CD8-positive, alpha-beta T cell (primary cell): ENCODE measurements at regions of chr11 and their contacts with region 1.

Region 1: DNA sequence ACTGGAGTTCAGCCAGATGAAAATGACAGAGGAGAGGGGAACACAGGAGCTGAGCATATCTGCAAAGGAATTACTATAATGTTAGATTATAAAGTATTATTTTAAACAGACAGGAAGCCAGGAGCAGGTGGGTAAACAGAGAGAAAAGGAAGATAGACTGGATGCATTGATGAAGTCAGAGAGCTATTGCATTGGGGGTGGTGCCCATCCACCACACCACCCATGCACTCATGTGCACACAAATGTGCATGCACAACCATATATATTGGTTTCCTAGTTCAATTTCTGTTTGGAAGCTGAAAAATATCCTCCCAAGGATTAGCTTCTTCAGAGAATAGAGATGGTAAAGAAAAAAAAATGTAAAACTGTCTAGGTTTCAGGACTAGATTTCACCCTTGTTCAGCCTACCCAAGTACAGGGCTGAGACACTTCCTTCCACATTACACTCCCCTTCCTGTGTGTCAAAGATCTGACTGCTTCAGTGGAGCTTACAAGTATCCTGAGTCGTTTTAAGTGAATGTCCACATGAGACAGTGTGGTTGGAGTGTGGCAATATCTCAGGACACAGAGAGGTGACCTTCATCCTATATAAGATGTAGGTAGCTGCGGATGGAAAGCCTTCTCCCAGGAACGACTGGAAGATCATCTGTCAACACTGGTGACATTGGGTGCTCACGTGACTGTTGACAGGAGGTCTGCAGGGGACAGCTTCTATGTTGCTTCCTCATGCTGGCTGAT is 12.2 kb upstream of the SMPD1 start:
- DNase-seq: peak in 1 of 9 experiments; percentile 45
- ATAC-seq: peak; percentile 81
- H3K4me3 ChIP-seq: peak overlapping the region in 1 of 2 experiments; percentile 17
- H3K4me3 Mint-ChIP-seq: peak overlapping the region; percentile 58
- H3K27ac ChIP-seq: peak overlapping the region in 1 of 2 experiments; percentile 7
- H3K27ac Mint-ChIP-seq: peak overlapping the region; percentile 86
- H3K4me1 ChIP-seq: peaks cover 18% of the 10 kb centered on the region
- H3K4me1 Mint-ChIP-seq: peaks cover 28% of the 10 kb centered on the region
- H3K27me3 ChIP-seq: no peaks in the 10 kb centered on the region
- H3K27me3 Mint-ChIP-seq: no peaks in the 10 kb centered on the region
- CTCF ChIP-seq: no peak

Region 2: DNA sequence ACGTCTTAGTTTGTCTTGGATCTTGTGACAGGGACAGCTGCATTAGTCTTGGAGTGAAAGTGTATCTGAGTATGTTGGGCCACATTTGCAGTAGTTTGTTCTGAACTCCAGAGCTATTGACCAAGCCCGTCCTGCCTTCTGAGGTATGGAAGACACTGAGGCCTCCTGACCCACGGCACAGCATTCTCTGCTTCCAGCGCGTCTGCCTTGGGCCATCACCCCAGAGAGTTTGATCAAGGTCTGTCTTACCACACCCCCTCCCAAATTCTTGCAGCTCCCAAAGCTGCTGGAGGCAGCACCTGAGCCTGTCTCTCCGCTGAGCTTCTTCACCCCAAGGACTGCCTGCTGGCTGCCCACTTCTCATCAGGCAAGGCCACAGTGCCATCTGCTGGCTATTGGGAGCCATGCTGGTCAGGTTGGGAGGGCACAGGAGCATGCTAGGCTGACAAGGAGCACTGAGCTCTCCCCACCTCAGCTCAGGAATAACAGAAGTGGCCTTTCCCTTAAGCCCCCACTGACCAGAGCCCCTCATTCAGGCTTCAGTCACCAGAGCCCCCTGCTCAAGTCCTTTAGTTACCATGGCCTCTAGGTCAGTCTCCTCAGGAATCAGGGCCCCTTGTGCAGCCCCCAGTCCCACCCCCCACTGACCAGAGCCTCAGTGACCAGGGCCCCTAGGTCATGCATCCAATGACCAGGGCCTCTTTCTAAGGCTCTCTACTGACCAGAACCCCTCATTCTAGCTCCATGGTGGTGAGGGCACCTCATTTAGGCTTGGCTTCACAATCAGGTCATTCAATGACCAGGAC is 15.0 kb before region 1 on chr11:
- CTCF ChIA-PET with region 1: interaction called, 50 read pairs
- POLR2A ChIA-PET with region 1: interaction called, 4 read pairs
- intact Hi-C with region 1: no loop called
- DNase-seq: peak; percentile 41 to 74 (median 64)
- ATAC-seq: peak; percentile 93
- H3K4me3 ChIP-seq: no peak overlapping the region
- H3K4me3 Mint-ChIP-seq: no peak overlapping the region
- H3K27ac ChIP-seq: no peak overlapping the region
- H3K27ac Mint-ChIP-seq: no peak overlapping the region
- H3K4me1 ChIP-seq: no peaks in the 10 kb centered on the region
- H3K4me1 Mint-ChIP-seq: no peaks in the 10 kb centered on the region
- H3K27me3 ChIP-seq: no peaks in the 10 kb centered on the region
- H3K27me3 Mint-ChIP-seq: no peaks in the 10 kb centered on the region
- CTCF ChIP-seq: peak; percentile 53

Region 3: GRCh38 chr11:6413791-6414201 is 35.7 kb after region 1 on chr11:
- CTCF ChIA-PET with region 1: interaction called, 28 read pairs
- POLR2A ChIA-PET with region 1: interaction called, 23 read pairs
- intact Hi-C with region 1: no loop called
- DNase-seq: peak in 8 of 9 experiments; percentile 38 to 86 (median 71)
- ATAC-seq: peak; percentile 87
- H3K4me3 ChIP-seq: peak overlapping the region in 1 of 2 experiments; percentile 3
- H3K4me3 Mint-ChIP-seq: no peak overlapping the region
- H3K27ac ChIP-seq: peak overlapping the region; percentile 20 to 52
- H3K27ac Mint-ChIP-seq: no peak overlapping the region
- H3K4me1 ChIP-seq: peaks cover 84% of the 10 kb centered on the region
- H3K4me1 Mint-ChIP-seq: peaks cover 38% of the 10 kb centered on the region
- H3K27me3 ChIP-seq: no peaks in the 10 kb centered on the region
- H3K27me3 Mint-ChIP-seq: no peaks in the 10 kb centered on the region
- CTCF ChIP-seq: peak; percentile 12

Region 4: DNA sequence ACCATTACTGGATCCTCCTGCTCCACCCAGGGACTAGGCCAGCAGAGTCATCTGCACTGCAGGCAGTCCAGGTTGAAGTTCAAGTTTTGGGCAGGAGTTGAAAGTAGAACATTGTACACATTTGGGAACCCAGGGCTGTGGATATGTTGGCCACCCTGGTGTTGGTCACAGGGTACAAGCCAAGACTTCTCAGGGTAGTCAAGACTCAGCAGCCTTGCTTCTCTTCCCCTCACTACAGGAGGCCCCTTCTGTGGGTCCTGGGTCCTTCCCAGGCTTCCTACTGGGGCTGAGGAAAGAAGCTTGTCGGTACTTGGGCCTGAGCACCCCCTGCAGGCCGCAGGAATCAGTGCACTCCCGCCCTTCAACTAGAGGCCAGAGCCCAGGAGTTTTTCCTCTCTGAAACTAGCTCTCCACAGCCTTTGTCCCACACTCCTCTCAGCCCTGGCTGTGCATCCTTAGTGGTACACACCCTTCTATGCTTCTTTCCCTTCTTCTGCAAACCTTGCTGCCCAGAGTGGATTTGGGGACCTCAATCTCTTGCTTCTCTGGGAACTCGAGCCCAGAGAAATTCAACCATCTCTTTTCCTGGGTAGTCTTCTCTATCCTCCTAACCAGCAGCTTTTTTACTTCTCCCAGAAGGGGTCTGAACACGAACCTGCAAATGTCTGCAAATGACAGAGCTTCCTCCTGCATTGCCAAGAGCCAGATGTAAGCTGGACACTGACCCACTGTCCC is 65.4 kb after region 1 on chr11:
- CTCF ChIA-PET with region 1: interaction called, 733 read pairs
- POLR2A ChIA-PET with region 1: interaction called, 24 read pairs
- intact Hi-C with region 1: loop called (anchors 1 kb)
- DNase-seq: peak; percentile 22 to 79 (median 60)
- ATAC-seq: peak; percentile 94
- H3K4me3 ChIP-seq: no peak overlapping the region
- H3K4me3 Mint-ChIP-seq: no peak overlapping the region
- H3K27ac ChIP-seq: no peak overlapping the region
- H3K27ac Mint-ChIP-seq: no peak overlapping the region
- H3K4me1 ChIP-seq: peaks cover 21% of the 10 kb centered on the region
- H3K4me1 Mint-ChIP-seq: no peaks in the 10 kb centered on the region
- H3K27me3 ChIP-seq: no peaks in the 10 kb centered on the region
- H3K27me3 Mint-ChIP-seq: no peaks in the 10 kb centered on the region
- CTCF ChIP-seq: peak; percentile 82

Region 5: DNA sequence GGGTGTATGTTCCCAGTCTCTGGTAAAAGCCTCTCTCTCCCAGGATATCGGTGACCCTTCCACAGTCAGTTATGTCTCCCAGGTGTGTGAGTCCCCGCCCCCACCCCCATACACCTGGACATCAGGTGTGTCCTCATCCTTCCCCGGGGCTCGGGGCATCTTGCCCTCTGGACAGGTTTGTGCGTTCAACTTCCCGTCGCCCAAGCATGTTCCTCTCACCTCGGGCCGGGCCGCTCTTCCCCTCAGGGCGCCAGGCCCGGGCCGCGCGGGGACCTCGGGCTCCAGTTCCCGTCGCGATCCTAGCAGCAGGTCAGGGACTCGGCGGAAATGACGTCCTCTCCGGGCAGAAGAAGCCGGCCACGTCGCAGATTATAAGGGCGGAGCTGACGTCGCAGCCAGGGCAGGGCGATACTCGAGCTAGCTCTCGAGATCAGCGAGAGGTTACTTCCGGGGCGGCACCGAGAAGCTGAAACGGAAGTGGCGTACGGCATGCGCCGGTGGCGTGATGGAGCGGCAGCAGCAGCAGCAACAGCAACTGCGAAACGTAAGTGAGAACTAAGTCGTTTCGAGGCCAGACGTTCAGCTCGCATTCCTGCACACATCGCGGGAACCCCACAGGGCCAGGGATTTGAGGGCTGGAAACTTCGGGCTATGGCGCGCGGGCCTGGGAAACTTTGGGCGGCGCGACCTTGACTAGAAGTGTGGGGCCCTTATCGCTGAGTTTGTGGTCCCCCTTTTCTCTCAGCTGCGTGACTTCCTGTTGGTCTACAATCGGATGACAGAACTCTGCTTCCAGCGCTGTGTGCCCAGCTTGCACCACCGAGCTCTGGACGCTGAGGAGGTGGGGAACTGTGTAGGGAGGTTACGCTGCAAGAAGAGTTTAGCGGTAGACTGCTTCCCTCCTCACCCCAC is 103.2 kb after region 1 on chr11 and contains the starts of genes ARFIP2 and TIMM10B:
- CTCF ChIA-PET with region 1: interaction called, 22 read pairs
- POLR2A ChIA-PET with region 1: interaction called, 15 read pairs
- intact Hi-C with region 1: no loop called
- DNase-seq: peak; percentile 92 to 99 (median 96)
- ATAC-seq: peak; percentile 95
- H3K4me3 ChIP-seq: peak within 1 kb of the TSS; percentile 76 to 87
- H3K4me3 Mint-ChIP-seq: peak within 1 kb of the TSS; percentile 96
- H3K27ac ChIP-seq: peak within 1 kb of the TSS; percentile 87 to 98
- H3K27ac Mint-ChIP-seq: peak within 1 kb of the TSS; percentile 99
- H3K4me1 ChIP-seq: peaks cover 32% of the 10 kb centered on the region
- H3K4me1 Mint-ChIP-seq: peaks cover 40% of the 10 kb centered on the region
- H3K27me3 ChIP-seq: no peaks in the 10 kb centered on the region
- H3K27me3 Mint-ChIP-seq: no peaks in the 10 kb centered on the region
- CTCF ChIP-seq: no peak
- total RNA-seq, gene ARFIP2: 76.5 to 89.7 TPM
- total RNA-seq, gene TIMM10B: 68.6 to 73.0 TPM

Region 6: DNA sequence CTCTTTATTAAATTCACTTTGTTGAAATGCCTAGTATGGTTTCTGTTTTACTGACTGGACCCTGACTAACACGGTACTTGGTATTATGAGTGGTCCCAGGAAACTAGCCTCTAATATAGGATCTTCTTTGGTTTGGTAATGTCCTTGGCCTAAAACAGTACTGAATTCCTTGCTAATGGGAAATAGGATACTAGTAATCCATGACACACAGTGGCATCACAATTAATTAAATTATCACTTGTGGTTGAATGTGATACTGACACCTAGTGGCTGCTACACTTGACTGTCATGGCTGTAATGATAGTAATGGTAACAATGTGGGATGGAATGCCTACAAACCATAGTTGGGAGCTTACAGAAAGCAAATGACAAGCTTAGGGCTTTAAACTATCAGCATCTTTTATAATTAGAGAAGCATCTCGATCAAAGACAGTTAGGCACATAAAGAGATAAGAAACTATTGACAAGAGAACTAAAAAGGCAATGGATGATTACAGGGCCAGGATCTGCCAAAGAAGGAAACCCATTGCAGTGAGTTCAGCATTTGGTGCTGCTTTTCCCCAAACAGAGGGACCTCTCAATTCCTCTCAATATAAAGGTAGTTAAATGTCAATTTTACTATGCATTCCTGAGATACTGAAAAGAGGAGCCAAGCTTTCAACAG is 127.6 kb after region 1 on chr11:
- CTCF ChIA-PET with region 1: interaction called, 96 read pairs
- POLR2A ChIA-PET with region 1: interaction called, 10 read pairs
- intact Hi-C with region 1: loop called (anchors 1 kb)
- DNase-seq: peak in 3 of 9 experiments; percentile 9 to 64 (median 51)
- ATAC-seq: peak; percentile 61
- H3K4me3 ChIP-seq: no peak overlapping the region
- H3K4me3 Mint-ChIP-seq: no peak overlapping the region
- H3K27ac ChIP-seq: no peak overlapping the region
- H3K27ac Mint-ChIP-seq: no peak overlapping the region
- H3K4me1 ChIP-seq: no peaks in the 10 kb centered on the region
- H3K4me1 Mint-ChIP-seq: peaks cover 4% of the 10 kb centered on the region
- H3K27me3 ChIP-seq: no peaks in the 10 kb centered on the region
- H3K27me3 Mint-ChIP-seq: no peaks in the 10 kb centered on the region
- CTCF ChIP-seq: peak; percentile 73

Region 7: DNA sequence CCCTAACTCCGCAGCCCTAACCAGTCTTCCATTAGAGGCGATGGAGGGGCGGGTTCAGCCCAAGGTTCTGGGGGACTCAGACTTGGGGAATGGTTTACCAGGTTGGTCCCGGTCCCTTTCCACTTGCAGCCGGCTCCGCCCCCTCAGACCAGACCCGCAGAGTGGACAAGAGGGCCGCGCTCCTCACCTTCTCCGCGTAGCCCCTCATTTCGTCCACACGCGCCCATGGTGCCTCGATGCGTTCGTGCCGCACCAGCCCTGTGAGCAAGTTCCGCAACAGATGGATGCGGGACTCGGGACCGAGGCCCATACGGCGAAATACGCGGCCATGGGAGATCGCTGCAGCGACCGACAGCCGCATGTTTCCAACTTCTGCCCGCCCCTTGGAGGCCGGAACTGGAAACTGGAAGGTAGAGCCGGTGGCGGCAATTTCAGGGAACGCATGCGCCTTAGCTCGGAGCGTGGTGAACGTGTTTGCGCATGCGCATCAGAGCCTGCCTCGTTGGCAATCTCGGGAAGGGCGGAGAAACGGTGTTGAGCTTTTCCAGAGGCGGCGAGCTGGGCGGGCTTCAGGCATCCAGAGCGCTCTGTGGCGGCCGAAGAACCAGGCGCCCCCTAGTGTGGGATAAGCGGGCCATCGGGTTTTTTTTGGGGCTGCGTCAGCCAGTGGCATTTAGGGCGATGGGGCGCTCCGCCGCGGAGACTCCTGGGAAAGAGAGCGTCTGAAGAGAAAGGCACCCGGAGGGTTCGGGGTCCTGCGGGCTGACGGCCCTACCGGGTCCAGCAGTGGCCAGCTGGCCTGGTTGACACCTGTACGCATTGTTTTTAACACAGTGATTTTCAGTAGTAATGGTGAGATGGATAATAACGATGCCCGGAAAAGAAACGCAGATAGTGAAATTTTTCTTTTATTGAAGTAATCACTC is 305.1 kb after region 1 on chr11 and contains the start of gene MRPL17:
- CTCF ChIA-PET with region 1: interaction called, 19 read pairs
- POLR2A ChIA-PET with region 1: interaction called, 4 read pairs
- intact Hi-C with region 1: loop called (anchors 5 kb)
- DNase-seq: peak; percentile 97 to 100 (median 99)
- ATAC-seq: peak; percentile 95
- H3K4me3 ChIP-seq: peak within 1 kb of the TSS; percentile 87 to 94
- H3K4me3 Mint-ChIP-seq: peak within 1 kb of the TSS; percentile 99
- H3K27ac ChIP-seq: peak within 1 kb of the TSS; percentile 81 to 84
- H3K27ac Mint-ChIP-seq: peak within 1 kb of the TSS; percentile 99
- H3K4me1 ChIP-seq: peaks cover 20% of the 10 kb centered on the region
- H3K4me1 Mint-ChIP-seq: peaks cover 38% of the 10 kb centered on the region
- H3K27me3 ChIP-seq: no peaks in the 10 kb centered on the region
- H3K27me3 Mint-ChIP-seq: no peaks in the 10 kb centered on the region
- CTCF ChIP-seq: peak; percentile 87
- total RNA-seq, gene MRPL17: 11.2 to 12.0 TPM